ENCODE measurements at regions of chr20 and their contacts with region 1.

Region 1: GRCh38 chr20:46089417-46090388 is at the start of gene NCOA5:
- DNase-seq: peak; percentile 60
- ATAC-seq: peak; percentile 96
- H3K4me3 ChIP-seq: peak within 1 kb of the TSS; percentile 84 to 92
- H3K27ac ChIP-seq: peak within 1 kb of the TSS; percentile 86
- H3K4me1 ChIP-seq: peaks cover 42% of the 10 kb centered on the region
- H3K27me3 ChIP-seq: no peaks in the 10 kb centered on the region
- CTCF ChIP-seq: peak; percentile 66
- total RNA-seq, gene NCOA5: 30.6 TPM

Region 2: DNA sequence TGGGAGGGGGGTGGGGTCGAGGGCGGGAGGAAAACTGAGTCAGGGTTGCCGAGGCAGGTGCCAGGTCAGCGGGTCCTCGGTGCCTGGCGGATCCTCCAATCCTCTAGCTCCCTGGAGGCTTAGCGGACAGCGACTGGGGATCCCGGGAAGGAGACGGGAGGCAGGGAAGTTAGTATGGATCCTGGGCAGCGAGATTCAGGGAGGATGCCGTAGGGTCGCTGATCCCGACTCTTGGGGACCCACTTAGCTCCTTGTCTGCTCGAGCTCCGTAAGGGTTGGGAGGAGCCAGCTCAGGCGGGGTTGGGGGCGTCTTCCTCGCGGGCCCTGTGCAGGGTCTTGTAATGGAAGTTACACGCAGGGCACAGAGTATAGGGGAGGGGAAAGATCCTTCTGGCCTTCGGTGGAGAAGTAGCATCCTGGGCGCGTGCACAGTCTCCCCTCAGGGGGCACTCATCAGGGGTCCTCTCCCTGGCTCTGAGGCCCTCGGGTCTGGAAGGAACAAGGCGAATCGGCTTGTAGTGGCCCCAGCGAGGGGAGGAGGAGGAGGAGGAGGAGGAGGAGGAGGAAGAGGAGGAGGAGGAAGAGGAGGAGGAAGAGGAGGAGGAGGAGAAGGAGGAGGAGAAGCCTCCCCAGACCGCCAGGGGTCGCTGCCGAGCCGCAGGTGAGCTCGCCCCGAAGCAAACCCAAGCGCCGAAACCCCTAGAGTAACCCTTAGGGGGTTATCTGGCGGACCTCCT is 67.1 kb before region 1 on chr20:
- CTCF ChIA-PET with region 1: interaction called, 7 read pairs
- POLR2A ChIA-PET with region 1: no interaction called
- in situ Hi-C with region 1: no loop called
- intact Hi-C with region 1: loop called (anchors 2 kb)
- DNase-seq: no peak
- ATAC-seq: peak; percentile 79
- H3K4me3 ChIP-seq: peak overlapping the region; percentile 48 to 72
- H3K27ac ChIP-seq: no peak overlapping the region
- H3K4me1 ChIP-seq: no peaks in the 10 kb centered on the region
- H3K27me3 ChIP-seq: 0 out of 2 replicates have a peak, but pooled peaks cover 2% of the 10 kb centered on the region
- CTCF ChIP-seq: peak; percentile 87

Measured in Panc1 (cell line).